AG04450 (cell line): ENCODE measurements at regions of chr2 and their contacts with region 1.

Region 1: GRCh38 chr2:191501561-191502168 is 176.3 kb upstream of the NABP1 start:
- DNase-seq: no peak
- H3K4me3 ChIP-seq: no peak overlapping the region
- H3K27ac ChIP-seq: no peak overlapping the region
- H3K27me3 ChIP-seq: no peaks in the 10 kb centered on the region
- CTCF ChIP-seq: peak; percentile 79

Region 2: DNA sequence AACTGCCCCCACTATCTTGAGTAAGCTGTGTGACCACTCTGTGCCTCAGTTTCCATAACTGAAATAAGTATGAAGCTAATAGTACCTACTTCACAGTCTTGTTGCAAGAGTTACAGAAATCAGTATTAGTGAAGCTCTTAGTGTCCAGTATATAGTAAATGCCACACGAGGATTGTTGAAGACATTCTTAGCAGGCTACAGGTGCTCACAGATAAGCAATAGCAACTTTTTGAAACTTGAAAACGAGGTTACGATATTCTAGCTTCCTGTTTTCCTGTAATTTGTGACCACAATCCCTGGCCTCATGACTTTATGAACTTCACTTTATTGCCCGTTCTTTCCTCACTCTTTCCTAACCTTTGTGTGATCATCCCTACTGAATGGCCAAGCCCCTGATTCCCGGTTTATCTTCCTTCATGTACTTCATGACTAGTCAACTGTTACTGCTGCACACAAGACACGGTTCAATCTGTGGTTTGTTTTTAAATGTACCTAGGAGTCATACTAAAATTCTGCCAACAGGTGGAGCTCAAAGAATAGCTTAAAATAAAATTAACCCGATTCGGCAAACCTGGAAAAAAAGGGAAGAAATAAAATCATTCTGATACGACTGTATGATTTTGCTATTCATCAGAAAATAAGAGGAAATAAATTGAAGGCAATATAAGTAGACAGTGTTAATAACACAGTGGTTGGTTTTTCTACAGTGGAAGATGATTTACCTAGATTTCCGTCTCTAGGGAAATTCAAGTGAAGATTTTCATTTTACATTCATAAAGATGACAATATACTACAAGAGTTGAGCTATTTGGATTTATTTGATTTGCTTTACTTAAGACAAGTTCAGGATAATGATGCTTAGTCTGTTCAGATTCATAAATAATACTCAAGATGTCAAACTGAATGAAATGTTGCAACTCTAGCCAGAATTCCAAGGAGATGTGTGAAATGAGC is 449.6 kb before region 1 on chr2:
- CTCF ChIA-PET with region 1: interaction called, 51 read pairs
- POLR2A ChIA-PET with region 1: no interaction called
- DNase-seq: no peak
- H3K4me3 ChIP-seq: no peak overlapping the region
- H3K27ac ChIP-seq: no peak overlapping the region
- H3K27me3 ChIP-seq: no peaks in the 10 kb centered on the region
- CTCF ChIP-seq: peak; percentile 69

Region 3: GRCh38 chr2:191165176-191165643 is 336.5 kb before region 1 on chr2:
- CTCF ChIA-PET with region 1: interaction called, 126 read pairs
- POLR2A ChIA-PET with region 1: no interaction called
- DNase-seq: no peak
- H3K4me3 ChIP-seq: no peak overlapping the region
- H3K27ac ChIP-seq: no peak overlapping the region
- H3K27me3 ChIP-seq: no peaks in the 10 kb centered on the region
- CTCF ChIP-seq: peak; percentile 81

Region 4: GRCh38 chr2:191226196-191226595 is 275.5 kb before region 1 on chr2:
- CTCF ChIA-PET with region 1: interaction called, 117 read pairs
- POLR2A ChIA-PET with region 1: no interaction called
- DNase-seq: no peak
- H3K4me3 ChIP-seq: no peak overlapping the region
- H3K27ac ChIP-seq: no peak overlapping the region
- H3K27me3 ChIP-seq: no peaks in the 10 kb centered on the region
- CTCF ChIP-seq: no peak

Region 5: DNA sequence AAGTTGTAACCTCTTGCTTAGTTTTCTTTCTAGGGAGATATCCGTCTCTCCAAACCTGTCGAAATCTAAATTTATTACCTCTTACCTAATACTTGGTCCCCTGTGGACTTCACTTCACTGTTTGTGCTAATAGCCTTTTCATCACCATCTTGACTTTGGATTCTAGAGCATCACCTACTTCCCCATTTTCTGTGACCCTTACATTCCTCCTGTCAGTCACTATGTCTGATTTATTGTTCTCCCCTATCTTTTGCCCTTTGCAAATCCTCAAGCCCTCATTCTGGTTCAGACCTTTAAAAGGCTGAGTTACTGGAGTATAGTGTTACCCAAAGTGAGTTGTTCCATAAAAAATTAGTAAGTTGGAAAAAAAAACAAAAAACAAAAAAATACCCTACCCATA is 249.0 kb before region 1 on chr2:
- CTCF ChIA-PET with region 1: interaction called, 12 read pairs
- POLR2A ChIA-PET with region 1: no interaction called
- DNase-seq: no peak
- H3K4me3 ChIP-seq: no peak overlapping the region
- H3K27ac ChIP-seq: no peak overlapping the region
- H3K27me3 ChIP-seq: no peaks in the 10 kb centered on the region
- CTCF ChIP-seq: no peak

Region 6: DNA sequence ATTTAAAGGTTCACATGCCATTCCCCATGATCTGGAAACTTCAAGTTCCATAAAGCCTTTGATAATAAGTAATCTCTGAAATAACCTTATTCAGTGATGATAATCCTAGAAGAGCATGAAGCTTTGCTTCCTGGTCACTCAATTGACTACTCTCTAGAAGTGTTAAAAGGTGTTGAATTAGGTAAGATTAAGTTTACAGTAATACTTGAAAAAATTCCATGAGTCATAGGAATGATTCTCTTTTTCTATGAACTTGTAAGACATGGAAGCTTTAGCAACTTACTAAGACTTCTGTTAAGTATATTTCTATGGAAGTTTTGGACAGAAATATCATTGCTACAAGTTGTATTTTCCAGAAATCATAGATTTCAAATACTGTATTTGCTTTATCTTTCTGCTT is 155.9 kb before region 1 on chr2:
- CTCF ChIA-PET with region 1: interaction called, 12 read pairs
- POLR2A ChIA-PET with region 1: no interaction called
- DNase-seq: no peak
- H3K4me3 ChIP-seq: no peak overlapping the region
- H3K27ac ChIP-seq: no peak overlapping the region
- H3K27me3 ChIP-seq: no peaks in the 10 kb centered on the region
- CTCF ChIP-seq: no peak

Region 7: DNA sequence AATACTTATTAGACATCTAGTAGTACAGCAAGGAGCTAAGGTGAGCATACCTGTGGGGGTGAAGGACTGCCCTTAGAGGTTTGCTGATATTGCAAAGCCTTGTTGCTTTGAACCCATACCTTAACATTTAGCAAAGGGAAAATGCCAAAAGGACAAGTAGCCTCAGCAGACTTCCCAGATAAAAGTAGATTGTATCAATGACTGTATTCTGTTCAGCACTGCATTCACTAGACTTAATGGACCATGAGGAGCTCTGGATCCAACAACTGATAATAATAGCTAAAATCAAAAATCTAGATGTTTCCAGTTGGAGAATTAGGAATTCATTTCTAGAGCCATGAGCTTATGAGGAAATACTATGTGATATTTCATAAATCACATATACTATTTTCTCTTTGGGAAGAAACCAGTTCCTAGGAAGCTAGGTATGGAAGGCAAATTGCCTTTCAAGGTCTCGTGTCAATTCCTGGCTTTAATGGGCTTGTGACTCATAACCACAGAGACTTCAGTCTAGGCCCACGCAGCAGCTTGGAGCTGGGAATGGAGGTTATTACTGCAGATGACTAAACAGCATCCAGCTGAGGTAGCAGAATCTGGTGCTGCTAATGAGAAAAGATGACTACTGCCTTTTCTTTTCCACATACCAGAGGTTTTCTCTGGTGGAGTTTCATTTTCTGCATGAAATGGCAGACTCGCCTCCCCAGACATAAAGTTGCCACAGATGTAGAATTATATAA is 14.9 kb before region 1 on chr2:
- CTCF ChIA-PET with region 1: interaction called, 42 read pairs
- POLR2A ChIA-PET with region 1: no interaction called
- DNase-seq: peak; percentile 91
- H3K4me3 ChIP-seq: no peak overlapping the region
- H3K27ac ChIP-seq: peak overlapping the region; percentile 63
- H3K27me3 ChIP-seq: no peaks in the 10 kb centered on the region
- CTCF ChIP-seq: no peak

Region 8: DNA sequence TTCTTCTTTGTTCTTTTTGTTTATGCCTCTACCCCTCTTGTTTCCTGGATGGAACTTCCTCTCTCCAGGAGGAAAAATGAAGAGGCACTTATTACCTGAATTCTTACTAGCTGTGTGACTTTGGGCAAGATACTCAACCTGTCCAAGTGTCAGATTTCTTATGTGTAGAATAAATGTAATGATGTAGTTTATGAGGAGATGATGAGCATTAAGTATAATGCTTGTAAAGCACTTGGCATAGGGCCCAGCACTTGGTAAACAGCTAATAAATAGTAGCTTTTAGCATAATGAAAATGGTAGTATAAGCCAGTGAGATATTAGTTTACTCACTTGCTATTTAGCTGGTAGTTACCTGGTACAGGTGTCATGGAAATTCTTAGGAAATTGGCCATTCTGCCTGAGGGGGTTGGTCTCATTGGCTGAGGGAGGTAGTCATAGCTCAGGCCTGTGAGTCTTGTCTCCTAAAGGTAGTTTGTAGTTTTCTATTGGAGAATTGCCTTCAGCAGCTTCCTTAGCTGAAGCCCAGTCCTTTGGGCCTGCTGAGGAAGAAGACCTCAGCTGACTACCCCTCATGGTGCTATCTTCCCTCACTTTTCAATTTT is 42.9 kb after region 1 on chr2:
- CTCF ChIA-PET with region 1: no interaction called
- POLR2A ChIA-PET with region 1: no interaction called
- DNase-seq: no peak
- H3K4me3 ChIP-seq: no peak overlapping the region
- H3K27ac ChIP-seq: no peak overlapping the region
- H3K27me3 ChIP-seq: peaks cover 3% of the 10 kb centered on the region
- CTCF ChIP-seq: no peak

Region 9: DNA sequence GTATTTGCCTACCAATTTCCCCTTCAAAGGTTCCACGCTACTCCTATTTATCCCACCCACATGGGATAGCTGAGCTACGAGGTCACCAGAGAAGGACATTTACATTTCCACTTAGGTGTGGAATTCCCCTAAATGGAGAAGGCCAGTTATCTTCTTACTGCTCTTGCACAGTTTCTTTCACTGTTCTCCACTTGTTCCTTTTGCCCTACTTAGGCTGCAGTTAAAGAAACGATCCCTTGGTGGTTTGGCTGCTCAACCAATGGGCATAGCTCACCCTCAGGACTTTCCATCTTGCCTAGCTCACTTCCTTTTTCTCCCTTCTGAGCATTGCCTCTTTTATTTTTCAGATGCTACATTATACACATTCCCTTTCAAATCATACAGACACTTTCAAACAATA is 165.1 kb after region 1 on chr2:
- CTCF ChIA-PET with region 1: no interaction called
- POLR2A ChIA-PET with region 1: no interaction called
- DNase-seq: no peak
- H3K4me3 ChIP-seq: no peak overlapping the region
- H3K27ac ChIP-seq: peak overlapping the region; percentile 63
- H3K27me3 ChIP-seq: no peaks in the 10 kb centered on the region
- CTCF ChIP-seq: no peak